AG04449 (cell line): ENCODE measurements at regions of chr6 and their contacts with region 1.

Region 1: GRCh38 chr6:64330694-64331307 is 695.2 kb downstream of the PHF3 start:
- DNase-seq: no peak
- H3K4me3 ChIP-seq: no peak overlapping the region
- CTCF ChIP-seq: peak; percentile 13

Region 2: GRCh38 chr6:63630466-63630865 is 700.3 kb before region 1 on chr6:
- CTCF ChIA-PET with region 1: no interaction called
- POLR2A ChIA-PET with region 1: no interaction called
- DNase-seq: no peak
- H3K4me3 ChIP-seq: no peak overlapping the region
- CTCF ChIP-seq: no peak

Region 3: GRCh38 chr6:64012351-64013001 is 318.3 kb before region 1 on chr6:
- CTCF ChIA-PET with region 1: interaction called, 12 read pairs
- POLR2A ChIA-PET with region 1: no interaction called
- DNase-seq: no peak
- H3K4me3 ChIP-seq: no peak overlapping the region
- CTCF ChIP-seq: peak; percentile 25

Region 4: DNA sequence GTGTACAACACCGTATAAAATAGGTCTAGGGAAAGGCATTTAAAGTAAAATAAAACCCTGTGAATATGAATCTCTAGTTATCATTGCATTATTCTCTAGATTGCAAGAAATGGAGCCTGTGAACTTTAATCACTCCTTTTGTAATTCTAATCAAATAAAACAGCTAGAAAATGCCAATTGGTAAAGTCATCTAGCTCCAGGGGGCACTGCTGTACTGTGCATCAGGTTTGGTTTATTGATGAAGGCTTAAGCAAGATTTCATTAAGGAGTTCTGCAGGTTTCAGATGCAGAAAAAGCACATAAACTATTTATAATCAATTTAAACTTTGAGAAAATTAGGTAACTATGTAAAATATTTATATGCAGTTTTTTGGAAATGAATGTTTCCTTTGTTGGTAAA is 50.2 kb before region 1 on chr6:
- CTCF ChIA-PET with region 1: interaction called, 32 read pairs
- POLR2A ChIA-PET with region 1: no interaction called
- DNase-seq: no peak
- H3K4me3 ChIP-seq: no peak overlapping the region
- CTCF ChIP-seq: no peak

Region 5: DNA sequence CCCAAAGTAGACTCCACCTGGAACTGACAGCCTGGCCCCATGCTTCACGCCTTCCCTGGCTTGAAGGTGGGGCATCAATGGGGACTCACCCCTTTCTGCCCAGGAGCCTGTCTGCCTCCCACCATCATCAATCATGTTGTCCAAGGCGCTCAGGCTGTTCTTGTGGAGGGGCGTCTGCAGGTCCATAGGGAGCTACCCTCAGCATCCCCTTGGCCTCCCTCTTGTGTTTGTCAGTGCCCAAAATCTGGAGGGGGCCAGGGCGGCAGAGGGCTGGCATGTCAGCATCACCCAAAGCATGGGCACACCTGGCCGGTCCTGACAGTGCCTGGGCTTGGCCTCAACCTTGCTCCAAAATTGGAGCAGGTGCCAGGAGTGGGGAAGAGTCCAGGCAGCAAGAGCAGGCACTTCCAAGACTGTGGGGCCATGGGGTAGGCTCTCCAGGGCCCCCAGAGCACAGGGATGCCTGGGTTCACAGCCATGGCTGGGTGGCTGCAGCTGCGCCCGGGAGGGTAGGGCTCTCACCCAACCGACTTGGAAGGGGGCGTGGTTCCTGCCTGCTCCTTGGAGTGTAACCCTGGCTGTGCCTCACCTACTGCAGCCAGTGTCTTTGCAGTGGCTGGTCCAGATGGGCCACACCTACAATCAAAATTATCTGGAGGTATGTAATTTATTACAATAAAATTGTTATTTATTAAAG is 472.8 kb after region 1 on chr6:
- CTCF ChIA-PET with region 1: no interaction called
- POLR2A ChIA-PET with region 1: no interaction called
- DNase-seq: no peak
- H3K4me3 ChIP-seq: no peak overlapping the region
- CTCF ChIP-seq: no peak